ENCODE measurements at regions of chr1 and their contacts with region 1.

Region 1: DNA sequence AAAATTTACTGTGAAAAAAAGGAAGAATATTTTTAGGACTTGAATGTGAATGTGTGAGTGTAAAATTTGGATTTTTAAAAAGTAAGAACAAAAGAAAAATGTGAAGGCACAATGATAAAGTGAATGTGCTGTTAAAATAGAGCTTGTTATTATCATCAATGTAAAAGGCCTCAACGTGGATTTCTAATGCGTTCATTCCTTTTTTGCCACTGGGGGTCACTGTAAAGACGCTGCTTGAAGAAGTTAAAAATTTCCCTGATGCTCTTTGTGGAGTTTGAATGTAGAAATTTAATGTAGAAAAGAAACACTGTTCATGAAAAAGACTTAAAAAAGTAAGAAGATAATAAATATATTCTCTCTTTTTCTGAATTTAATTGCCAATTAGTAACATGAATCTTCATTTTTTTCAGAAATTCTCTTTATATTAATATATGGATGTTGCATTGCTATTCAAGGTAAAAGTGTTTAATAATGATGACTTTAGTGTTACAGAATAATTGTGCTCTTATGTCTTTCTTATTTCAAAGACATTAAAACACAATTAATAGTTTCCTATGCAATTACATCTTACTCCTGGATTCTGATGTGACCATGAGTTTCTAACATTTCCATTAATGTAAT is 161.5 kb downstream of the DNM3 start:
- DNase-seq: peak; percentile 73
- ATAC-seq: peak; percentile 69
- H3K4me3 ChIP-seq: no peak overlapping the region
- H3K27ac ChIP-seq: no peak overlapping the region
- H3K4me1 ChIP-seq: peaks cover 3% of the 10 kb centered on the region; the same call in 1 of the 2 replicates
- H3K27me3 ChIP-seq: no peaks in the 10 kb centered on the region
- CTCF ChIP-seq: peak; percentile 92
- POLR2A ChIP-seq: no peak
- RAD21 ChIP-seq: peak; percentile 94

Region 2: DNA sequence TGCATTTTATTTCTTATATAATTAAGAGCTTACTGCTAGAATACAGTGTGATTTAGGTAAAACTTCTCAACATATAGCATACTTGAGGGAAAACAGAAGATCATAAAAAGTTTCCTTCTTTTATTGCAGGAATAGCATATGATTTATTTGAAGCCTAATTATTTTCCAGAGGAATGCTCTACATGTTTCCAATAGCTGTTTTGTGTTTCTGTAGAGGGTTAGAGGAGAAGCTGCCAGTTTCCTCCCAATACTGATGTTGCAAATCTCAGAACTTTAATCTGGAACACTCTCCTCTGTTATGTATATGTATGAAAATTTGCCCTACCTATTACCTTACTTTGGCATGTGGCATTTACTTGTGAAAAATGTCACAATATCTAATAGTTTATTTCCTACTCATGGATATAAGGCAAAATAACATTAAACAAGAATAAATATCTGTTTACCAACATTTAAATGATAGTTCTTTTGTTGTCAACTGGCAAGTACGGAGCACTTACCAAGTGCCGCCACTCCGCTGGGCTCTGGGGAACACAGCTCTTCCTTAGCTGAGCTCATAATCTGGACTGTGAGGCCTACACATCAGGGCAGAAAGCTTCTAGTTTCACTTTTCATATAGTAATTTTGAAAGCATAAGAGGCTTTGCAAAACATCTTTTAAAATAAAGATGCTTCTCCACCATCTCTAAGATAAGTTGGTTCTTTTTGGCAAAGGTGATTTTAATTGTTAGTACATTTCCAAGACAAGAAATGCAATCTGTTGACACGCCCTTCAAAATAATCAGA is 177.9 kb after region 1 on chr1:
- CTCF ChIA-PET with region 1: interaction called, 11 read pairs
- POLR2A ChIA-PET with region 1: no interaction called
- dilution Hi-C with region 1: no loop called
- in situ Hi-C with region 1: no loop called
- intact Hi-C with region 1: no loop called
- DNase-seq: peak; percentile 70
- ATAC-seq: peak; percentile 67
- H3K4me3 ChIP-seq: peak overlapping the region; percentile 52; the same call in 1 of the 2 replicates
- H3K27ac ChIP-seq: peak overlapping the region; percentile 99
- H3K4me1 ChIP-seq: peaks cover 12% of the 10 kb centered on the region
- H3K27me3 ChIP-seq: no peaks in the 10 kb centered on the region
- CTCF ChIP-seq: no peak
- POLR2A ChIP-seq: no peak
- RAD21 ChIP-seq: no peak

Region 3: DNA sequence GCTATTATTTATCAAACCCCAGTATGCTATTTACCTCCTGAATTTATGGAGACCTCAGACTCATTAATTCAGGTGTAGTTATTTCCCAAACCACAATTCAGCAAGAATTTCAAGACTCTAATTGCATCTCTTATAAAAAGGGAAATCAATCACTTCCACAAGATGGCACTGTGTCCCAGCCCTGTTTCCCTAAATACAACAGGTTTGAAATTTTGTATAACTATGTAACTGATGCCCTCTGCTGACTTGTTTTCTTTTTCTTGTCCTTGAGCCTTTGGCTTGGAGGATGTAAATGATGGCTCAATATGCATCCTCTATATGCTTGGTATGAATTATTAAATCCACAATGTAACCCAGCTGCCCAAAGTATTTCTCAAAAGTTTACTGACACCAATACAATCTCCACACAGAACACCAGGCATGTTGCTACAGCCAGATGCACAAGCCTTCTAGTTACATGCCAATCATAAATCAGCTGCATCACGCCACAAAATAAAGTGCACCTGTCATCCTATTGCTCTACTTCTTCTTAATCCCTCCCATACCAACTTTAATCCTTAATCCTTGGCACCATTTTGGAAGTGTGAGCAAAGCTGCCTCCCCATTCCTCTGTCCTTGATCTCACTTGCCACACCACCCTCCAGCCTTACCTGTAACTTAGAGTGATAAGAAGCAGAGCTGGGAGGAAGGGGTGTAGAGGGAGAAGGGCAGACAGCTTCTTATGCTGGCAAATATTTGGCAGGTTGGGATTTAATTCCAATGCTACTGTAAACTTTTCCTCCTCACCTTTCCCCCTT is 426.7 kb after region 1 on chr1:
- CTCF ChIA-PET with region 1: interaction called, 4 read pairs
- POLR2A ChIA-PET with region 1: no interaction called
- dilution Hi-C with region 1: no loop called
- in situ Hi-C with region 1: loop called (anchors 10 kb)
- intact Hi-C with region 1: loop called (anchors 1 kb)
- DNase-seq: peak; percentile 70
- ATAC-seq: peak; percentile 80
- H3K4me3 ChIP-seq: no peak overlapping the region
- H3K27ac ChIP-seq: no peak overlapping the region
- H3K4me1 ChIP-seq: no peaks in the 10 kb centered on the region
- H3K27me3 ChIP-seq: no peaks in the 10 kb centered on the region
- CTCF ChIP-seq: peak; percentile 84
- POLR2A ChIP-seq: no peak
- RAD21 ChIP-seq: peak; percentile 77

Region 4: DNA sequence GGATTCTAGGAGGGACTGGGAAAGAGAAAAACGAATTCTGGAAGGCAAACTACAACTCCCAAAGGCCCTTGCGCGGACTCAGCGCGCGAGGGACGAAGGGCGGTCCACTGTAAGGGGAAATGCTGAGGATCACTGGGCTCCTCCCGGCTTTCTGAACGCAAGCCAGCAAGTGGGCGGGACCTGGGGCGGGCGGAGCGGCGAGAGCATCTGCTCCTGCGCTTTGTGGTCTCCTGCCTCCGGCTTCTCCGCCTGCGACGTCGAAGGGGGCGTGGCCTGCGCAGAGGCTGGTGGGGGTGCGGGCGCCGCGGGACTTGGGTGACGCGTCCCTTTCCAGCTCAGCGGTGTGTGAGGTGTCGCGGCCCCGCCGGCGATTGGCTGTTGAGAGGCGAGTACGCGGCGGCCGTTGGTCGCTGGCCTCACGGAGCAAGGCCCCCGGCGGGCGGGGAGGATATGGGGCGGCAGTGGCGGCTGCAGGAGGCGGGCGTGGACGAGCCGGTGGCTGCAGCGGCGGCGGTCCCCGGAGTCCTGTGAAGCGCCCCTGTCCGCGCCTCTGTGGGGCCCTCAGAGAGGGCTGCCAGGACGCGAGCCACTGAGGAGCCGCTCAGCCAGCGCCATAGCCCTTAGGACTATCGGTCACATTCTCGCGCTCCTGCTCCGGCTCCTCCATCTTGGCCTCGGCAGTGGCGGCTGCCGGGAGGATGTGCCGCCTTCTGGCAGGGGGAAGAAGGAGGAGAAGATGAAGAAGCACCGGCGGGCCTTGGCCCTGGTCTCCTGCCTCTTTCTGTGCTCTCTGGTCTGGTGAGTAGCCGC is 530.1 kb after region 1 on chr1 and contains the start of gene SUCO:
- CTCF ChIA-PET with region 1: no interaction called
- POLR2A ChIA-PET with region 1: no interaction called
- dilution Hi-C with region 1: no loop called
- in situ Hi-C with region 1: no loop called
- intact Hi-C with region 1: loop called (anchors 5 kb)
- DNase-seq: peak; percentile 99
- ATAC-seq: peak; percentile 92
- H3K4me3 ChIP-seq: peak within 1 kb of the TSS; percentile 97
- H3K27ac ChIP-seq: peak within 1 kb of the TSS; percentile 83
- H3K4me1 ChIP-seq: peaks cover 2% of the 10 kb centered on the region; the same call in 1 of the 2 replicates
- H3K27me3 ChIP-seq: no peaks in the 10 kb centered on the region
- CTCF ChIP-seq: no peak
- POLR2A ChIP-seq: peak; percentile 86
- RAD21 ChIP-seq: peak; percentile 1; the same call in 1 of the 2 replicates
- total RNA-seq, gene SUCO: 21.5 and 31.7 TPM in 2 replicates